Esophagus squamous epithelium (tissue), 5 donors: ENCODE measurements at regions of chr18 and their contacts with region 1.

Region 1: GRCh38 chr18:9711361-9712129 is 3.4 kb downstream of the RAB31 start:
- DNase-seq: no peak
- H3K4me3 ChIP-seq: peak overlapping the region in 1 of 4 donors; percentile 18
- H3K27ac ChIP-seq: peak overlapping the region in 3 of 4 donors; percentile 1 to 51 (median 13)
- H3K4me1 ChIP-seq: peaks cover 18 to 53% (median 28%) of the 10 kb centered on the region in 3 donors
- H3K27me3 ChIP-seq: no peaks in the 10 kb centered on the region
- CTCF ChIP-seq: no peak
- POLR2A ChIP-seq: peak in 1 of 4 donors; percentile 10

Region 2: DNA sequence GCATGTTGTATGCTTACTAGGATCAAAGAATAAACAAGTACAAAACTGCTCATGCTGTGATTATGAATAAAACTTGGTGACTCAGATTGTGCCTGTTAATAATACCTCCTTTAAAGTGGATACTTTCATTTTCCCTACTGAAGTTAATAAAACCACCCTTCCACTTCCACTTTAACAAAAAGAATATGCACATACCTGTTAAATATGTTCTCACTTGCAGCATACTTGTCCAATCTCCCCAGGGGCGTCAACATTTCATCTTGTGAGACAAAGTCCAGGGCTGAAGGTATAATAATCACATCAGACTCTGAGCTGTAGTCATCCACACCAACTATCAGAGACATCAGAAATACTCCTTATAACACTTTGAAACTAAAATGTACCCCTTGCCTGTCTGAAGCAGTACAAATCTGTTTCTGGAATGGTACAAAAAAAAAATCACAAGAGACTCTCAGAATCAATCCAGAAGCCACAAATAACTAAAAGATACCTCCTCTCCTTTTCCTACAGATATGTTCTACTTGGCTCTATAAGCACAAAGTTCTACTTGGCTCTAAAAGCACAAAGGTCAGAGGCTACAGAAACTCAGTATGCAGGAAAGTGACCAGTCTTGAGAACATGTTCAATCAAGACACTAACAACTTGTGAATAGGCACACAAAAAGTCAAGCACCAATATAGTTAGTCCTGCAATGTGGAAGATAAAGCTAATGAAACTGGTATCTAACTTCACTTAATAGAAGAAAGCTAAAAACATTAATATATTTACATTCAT is 116.5 kb before region 1 on chr18:
- intact Hi-C with region 1: no loop called
- DNase-seq: no peak
- H3K4me3 ChIP-seq: peak overlapping the region in 1 of 4 donors; percentile 3
- H3K27ac ChIP-seq: peak overlapping the region; percentile 5 to 74 (median 62)
- H3K4me1 ChIP-seq: peaks cover 3 to 56% (median 21%) of the 10 kb centered on the region in 3 donors
- H3K27me3 ChIP-seq: no peaks in the 10 kb centered on the region
- CTCF ChIP-seq: no peak
- POLR2A ChIP-seq: no peak

Region 3: DNA sequence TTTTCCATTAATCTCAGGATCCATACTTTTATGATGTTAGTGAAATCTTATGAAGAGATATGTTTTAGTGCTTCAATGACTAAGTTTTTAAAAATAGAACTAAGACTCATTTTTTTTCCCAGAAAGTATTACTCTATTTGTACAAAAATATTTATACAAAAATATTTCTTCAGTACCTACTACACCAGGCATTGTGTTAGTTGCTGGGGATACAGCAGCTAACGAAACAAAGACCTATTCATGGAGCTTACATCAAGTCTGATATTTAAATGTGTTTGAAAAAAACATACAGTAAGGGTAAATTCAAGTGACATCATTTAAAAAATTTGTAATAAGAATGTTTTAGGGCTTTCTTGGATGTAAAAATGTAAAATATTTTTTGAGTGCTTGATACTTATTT is 213.8 kb after region 1 on chr18:
- intact Hi-C with region 1: loop called (anchors 10 kb)
- DNase-seq: no peak
- H3K4me3 ChIP-seq: no peak overlapping the region
- H3K27ac ChIP-seq: peak overlapping the region in 1 of 4 donors; percentile 41
- H3K4me1 ChIP-seq: peaks cover 10 to 96% (median 60%) of the 10 kb centered on the region in 3 donors
- H3K27me3 ChIP-seq: no peaks in the 10 kb centered on the region
- CTCF ChIP-seq: no peak
- POLR2A ChIP-seq: no peak

Region 4: GRCh38 chr18:10100941-10101701 is 389.6 kb after region 1 on chr18:
- intact Hi-C with region 1: no loop called
- DNase-seq: no peak
- H3K4me3 ChIP-seq: no peak overlapping the region
- H3K27ac ChIP-seq: no peak overlapping the region
- H3K4me1 ChIP-seq: peaks cover 0 to 13% (median 10%) of the 10 kb centered on the region in 3 donors
- H3K27me3 ChIP-seq: no peaks in the 10 kb centered on the region
- CTCF ChIP-seq: no peak
- POLR2A ChIP-seq: no peak